K562 (cell line): ENCODE measurements at regions of chr6 and their contacts with region 1.

Region 1: DNA sequence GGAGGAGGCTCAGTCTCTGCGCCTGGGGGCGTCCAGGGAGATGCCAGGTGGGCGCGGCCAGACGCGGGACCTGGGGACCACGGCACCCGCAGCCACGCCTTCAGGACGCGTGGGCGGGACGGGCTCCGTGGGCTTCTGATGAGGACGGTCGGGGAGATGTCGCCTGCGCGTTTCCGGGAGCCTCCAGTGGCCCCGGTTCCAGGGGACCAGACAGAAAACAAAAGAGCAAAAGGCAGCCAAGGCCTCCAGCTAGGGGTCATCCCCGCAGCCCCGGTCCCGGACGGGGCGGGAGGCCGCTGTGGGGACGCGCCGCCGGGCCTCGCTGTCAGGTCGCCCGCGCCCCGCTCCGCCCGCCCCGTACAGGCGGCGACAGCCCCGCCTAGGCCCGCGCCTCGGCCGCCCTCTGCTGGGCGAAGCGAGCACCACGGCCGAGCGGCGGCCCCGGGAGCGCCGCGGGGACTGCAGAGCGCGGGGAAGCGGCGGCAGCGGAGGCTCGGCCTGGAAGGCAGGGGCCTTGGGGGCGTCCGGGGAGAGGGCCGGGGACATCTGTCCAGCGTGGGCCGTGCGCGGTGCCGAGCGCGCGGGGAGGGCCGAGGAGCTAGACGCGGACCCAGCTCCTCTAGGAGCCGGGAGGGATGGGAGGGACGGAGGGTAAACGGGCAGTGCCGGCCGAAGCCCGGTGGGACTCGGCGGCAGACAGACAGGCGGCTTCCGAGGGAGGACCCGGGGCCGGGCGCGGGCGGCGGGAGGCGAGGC is 48.7 kb downstream of the TMEM242 start:
- DNase-seq: peak; percentile 87 to 95 (median 94)
- ATAC-seq: peak; percentile 98
- H3K4me3 ChIP-seq: peak overlapping the region; percentile 63
- H3K27ac ChIP-seq: peak overlapping the region; percentile 54; the same call in 2 of the 3 replicates
- H3K4me1 ChIP-seq: peaks cover 14 to 26% of the 10 kb centered on the region in 2 experiments; a peak in 4 of 5 replicates
- H3K27me3 ChIP-seq: peaks cover 0 to 7% of the 10 kb centered on the region in 2 experiments; a peak in 2 of 5 replicates
- CTCF ChIP-seq: peak; percentile 54 to 94 (median 85); a peak in 5 of 6 replicates
- EP300 ChIP-seq: 0 out of 2 replicates have a peak, but pooled peaks have one; percentile 4
- POLR2A ChIP-seq: peak; percentile 63
- RAD21 ChIP-seq: peak; percentile 88 to 93

Region 2: DNA sequence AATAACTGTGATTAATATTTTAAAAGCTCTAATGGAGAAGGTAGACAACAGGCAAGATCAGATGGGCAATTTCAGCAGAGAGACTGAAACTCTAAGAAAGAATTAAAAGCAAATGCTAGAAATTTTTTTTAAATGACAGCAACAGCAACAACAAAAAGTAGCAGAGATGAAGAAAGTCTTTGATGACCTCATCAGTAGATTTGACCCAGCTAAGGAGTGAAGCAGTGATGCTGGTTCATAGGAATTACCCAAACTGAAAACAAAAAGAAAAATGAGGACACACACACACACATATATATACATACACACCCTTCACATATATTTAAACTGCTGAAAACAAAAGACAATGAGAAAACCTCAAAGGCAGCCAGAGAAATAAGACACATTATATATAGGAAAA is 695.1 kb before region 1 on chr6:
- CTCF ChIA-PET with region 1: no interaction called
- POLR2A ChIA-PET with region 1: no interaction called
- in situ Hi-C with region 1: no loop called
- intact Hi-C with region 1: loop called (anchors 10 kb)
- DNase-seq: no peak
- ATAC-seq: no peak
- H3K4me3 ChIP-seq: no peak overlapping the region
- H3K27ac ChIP-seq: no peak overlapping the region
- H3K4me1 ChIP-seq: no peaks in the 10 kb centered on the region
- H3K27me3 ChIP-seq: peaks cover 0 to 2% of the 10 kb centered on the region in 2 experiments; a peak in 1 of 5 replicates
- CTCF ChIP-seq: no peak
- EP300 ChIP-seq: no peak
- POLR2A ChIP-seq: no peak
- RAD21 ChIP-seq: no peak

Region 3: DNA sequence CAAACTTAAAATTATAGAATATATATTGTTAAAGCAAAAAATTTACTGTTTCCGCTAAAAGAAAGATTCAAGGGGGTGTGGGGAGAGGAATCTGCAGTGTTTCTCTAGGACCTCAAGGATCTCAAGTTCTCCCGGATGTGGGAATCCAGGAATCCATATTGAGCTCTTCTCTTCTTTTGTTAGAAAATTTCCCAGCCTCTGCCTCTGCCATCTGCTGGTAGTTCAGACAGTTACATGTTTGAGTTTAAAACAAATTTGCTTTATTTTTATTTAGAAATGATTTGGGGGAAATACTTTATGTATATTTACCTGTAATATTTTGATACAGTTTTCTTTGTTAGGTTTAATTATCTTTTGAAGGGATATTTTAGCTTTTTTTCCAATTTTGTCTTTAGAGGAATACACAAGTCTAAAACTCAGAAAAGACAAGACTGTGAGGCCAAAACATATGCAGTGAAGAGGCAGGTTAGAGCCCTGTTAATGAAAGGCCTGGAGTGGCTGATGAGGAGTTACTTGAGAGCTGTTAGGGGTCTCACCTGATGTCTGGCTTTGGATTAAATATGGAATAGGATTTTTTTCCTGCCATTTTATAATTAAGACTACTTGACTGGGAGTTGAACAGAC is 228.7 kb before region 1 on chr6:
- CTCF ChIA-PET with region 1: no interaction called
- POLR2A ChIA-PET with region 1: no interaction called
- in situ Hi-C with region 1: no loop called
- intact Hi-C with region 1: loop called (anchors 5 kb)
- DNase-seq: peak in 2 of 4 experiments; percentile 29 to 35
- ATAC-seq: peak; percentile 45; the same call in 1 of the 3 replicates
- H3K4me3 ChIP-seq: no peak overlapping the region
- H3K27ac ChIP-seq: no peak overlapping the region
- H3K4me1 ChIP-seq: peaks cover 8 to 21% of the 10 kb centered on the region in 2 experiments; a peak in 4 of 5 replicates
- H3K27me3 ChIP-seq: no peaks in the 10 kb centered on the region
- CTCF ChIP-seq: peak; percentile 48 to 73 (median 54); a peak in 5 of 6 replicates
- EP300 ChIP-seq: no peak
- POLR2A ChIP-seq: no peak
- RAD21 ChIP-seq: peak in 1 of 2 experiments; percentile 34; a peak in 3 of 4 replicates

Region 4: DNA sequence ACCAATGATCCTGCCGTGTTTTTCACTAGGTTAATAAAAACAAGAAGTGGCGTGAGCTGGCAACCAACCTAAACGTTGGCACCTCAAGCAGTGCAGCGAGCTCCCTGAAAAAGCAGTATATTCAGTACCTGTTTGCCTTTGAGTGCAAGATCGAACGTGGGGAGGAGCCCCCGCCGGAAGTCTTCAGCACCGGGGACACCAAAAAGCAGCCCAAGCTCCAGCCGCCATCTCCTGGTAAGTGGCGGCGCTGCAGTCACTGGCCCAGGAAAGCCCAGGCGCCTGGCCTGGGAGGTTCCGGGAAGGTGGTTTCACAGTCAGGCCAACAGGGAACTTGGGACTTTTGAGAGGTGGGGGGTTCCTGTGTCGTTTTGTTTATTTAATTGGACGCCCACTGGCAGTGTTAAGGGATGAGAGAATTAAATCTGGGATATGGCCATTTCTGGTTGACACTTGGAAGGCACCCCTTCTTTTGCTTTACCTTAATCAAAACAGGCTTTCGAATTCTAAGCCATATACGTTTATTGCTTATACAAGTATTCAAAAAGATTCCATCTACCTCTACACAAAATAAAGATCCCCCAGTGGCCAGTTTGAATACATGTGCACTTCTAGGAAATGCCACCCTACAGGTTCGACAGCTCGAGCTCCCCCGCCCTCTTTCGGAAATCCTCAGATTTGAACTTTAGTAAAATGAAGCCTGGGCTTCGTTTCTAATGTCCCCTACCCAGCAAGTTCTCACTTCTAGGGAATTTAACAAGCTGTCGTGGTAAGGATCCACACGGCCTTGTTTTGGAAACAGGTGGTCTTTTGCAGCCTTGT is 90.2 kb before region 1 on chr6:
- CTCF ChIA-PET with region 1: interaction called, 3 read pairs
- POLR2A ChIA-PET with region 1: no interaction called
- in situ Hi-C with region 1: no loop called
- intact Hi-C with region 1: loop called (anchors 5 kb)
- DNase-seq: peak; percentile 85 to 88 (median 88)
- ATAC-seq: peak; percentile 99
- H3K4me3 ChIP-seq: no peak overlapping the region
- H3K27ac ChIP-seq: no peak overlapping the region
- H3K4me1 ChIP-seq: peaks cover 0 to 6% of the 10 kb centered on the region in 2 experiments; a peak in 3 of 5 replicates
- H3K27me3 ChIP-seq: no peaks in the 10 kb centered on the region
- CTCF ChIP-seq: peak; percentile 96 to 97 (median 97)
- EP300 ChIP-seq: 0 out of 2 replicates have a peak, but pooled peaks have one; percentile 15
- POLR2A ChIP-seq: no peak
- RAD21 ChIP-seq: peak; percentile 90 to 94

Region 5: DNA sequence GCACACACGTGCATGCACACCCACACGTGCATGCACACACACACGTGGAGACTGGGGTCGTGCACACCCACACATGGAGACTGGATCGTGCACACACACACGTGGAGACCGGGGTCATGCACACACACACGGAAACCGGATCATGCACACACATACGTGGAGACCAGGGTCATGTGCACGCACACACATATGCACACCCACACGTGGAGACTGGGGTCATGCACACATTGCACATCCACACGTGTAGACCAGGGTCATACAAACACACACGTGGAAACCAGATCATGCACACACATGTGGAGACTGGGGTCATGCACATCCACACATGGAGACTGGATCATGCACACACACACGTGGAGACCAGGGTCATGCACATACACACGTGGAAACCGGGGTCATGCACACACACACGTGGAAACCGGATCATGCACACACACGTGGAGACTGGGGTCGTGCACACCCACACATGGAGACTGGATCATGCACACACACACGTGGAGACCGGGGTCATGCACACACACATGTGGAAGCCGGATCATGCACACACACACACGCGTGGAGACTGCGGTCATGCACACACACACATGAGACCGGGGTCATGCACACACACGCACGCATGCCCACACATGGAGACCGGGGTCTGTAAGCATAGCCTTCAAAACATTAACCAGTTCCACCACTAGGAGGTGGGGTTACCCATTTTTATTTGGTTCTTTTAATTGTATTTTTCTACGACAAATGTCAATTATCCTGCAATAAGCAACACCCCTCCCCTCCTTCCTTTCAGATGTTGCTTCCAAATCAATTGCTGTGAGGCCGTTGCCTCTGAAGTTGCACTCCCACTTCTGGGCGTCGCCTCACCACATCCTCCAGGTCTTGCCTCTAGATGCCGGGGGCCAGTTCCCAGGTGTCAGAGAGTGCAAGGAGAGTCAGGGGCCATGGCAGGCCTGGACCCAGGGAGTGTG is 47.2 kb before region 1 on chr6:
- CTCF ChIA-PET with region 1: interaction called, 3 read pairs
- POLR2A ChIA-PET with region 1: interaction called, 5 read pairs
- in situ Hi-C with region 1: no loop called
- intact Hi-C with region 1: loop called (anchors 1 kb)
- DNase-seq: peak; percentile 49 to 65 (median 60)
- ATAC-seq: peak; percentile 49
- H3K4me3 ChIP-seq: no peak overlapping the region
- H3K27ac ChIP-seq: no peak overlapping the region
- H3K4me1 ChIP-seq: peaks cover 25 to 57% of the 10 kb centered on the region in 2 experiments
- H3K27me3 ChIP-seq: peaks cover 0 to 9% of the 10 kb centered on the region in 2 experiments; a peak in 1 of 5 replicates
- CTCF ChIP-seq: peak; percentile 43 to 67 (median 56); a peak in 5 of 6 replicates
- EP300 ChIP-seq: no peak
- POLR2A ChIP-seq: no peak
- RAD21 ChIP-seq: peak in 1 of 2 experiments; percentile 53; a peak in 2 of 4 replicates

Region 6: DNA sequence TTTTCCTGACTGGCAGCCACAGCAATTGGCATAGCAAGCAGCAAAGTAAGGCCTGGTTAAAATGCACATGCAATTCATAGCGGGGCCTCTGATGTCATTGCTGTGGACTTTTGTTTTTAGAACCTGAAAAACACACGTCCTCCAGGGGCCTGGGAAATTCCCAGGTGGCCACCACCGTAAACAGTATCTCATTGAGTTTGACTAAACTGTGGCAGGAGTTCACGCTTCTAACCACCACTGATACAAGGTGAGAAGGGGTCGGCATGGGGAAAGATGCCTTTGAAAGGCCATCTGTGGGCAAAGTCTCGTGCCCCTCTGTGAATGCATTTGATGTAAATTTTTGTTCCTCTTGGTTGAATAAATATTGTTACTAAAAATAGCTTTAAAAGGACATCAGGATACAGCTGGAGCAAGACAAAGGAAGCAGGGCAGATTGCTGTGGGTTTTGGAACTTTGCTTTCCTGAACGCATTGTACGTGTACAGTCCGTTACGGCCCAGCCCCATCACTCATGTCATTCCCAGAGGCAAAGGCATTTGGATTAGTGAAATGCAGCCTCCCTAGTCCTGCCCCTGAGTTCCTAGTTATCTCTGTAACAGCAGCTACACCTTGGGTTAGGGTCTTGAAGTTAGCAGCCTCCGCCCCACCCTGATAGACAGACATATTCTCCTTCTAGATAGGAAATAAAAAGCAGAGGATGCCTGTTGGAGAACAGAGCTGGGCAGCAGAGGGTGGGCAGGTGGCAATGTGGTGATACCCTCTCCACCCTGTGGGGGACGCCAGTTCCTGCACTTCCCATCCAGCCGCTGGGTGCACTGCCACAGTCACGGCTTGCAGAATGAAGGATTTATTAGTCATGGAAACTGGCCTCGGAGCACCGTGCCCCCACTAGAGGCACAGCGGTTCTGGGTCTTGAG is 186.6 kb after region 1 on chr6:
- CTCF ChIA-PET with region 1: no interaction called
- POLR2A ChIA-PET with region 1: no interaction called
- in situ Hi-C with region 1: no loop called
- intact Hi-C with region 1: no loop called
- DNase-seq: peak; percentile 76 to 90 (median 82)
- ATAC-seq: peak; percentile 85
- H3K4me3 ChIP-seq: no peak overlapping the region
- H3K27ac ChIP-seq: peak overlapping the region; percentile 54; the same call in 2 of the 3 replicates
- H3K4me1 ChIP-seq: peaks cover 51 to 66% of the 10 kb centered on the region in 2 experiments
- H3K27me3 ChIP-seq: no peaks in the 10 kb centered on the region
- CTCF ChIP-seq: peak; percentile 84 to 98 (median 91)
- EP300 ChIP-seq: peak; percentile 52; the same call in 1 of the 2 replicates
- POLR2A ChIP-seq: no peak
- RAD21 ChIP-seq: peak; percentile 67 to 79